ENCODE measurements at regions of chr3 and their contacts with region 1.

Region 1: GRCh38 chr3:10115326-10116137 is at the start of gene BRK1:
- DNase-seq: peak; percentile 90
- H3K4me3 Mint-ChIP-seq: peak within 1 kb of the TSS; percentile 97
- H3K27ac Mint-ChIP-seq: peak within 1 kb of the TSS; percentile 96
- H3K4me1 Mint-ChIP-seq: peaks cover 19% of the 10 kb centered on the region
- H3K27me3 Mint-ChIP-seq: no peaks in the 10 kb centered on the region
- total RNA-seq, gene BRK1: 94.4 and 100 TPM in 2 replicates

Region 2: DNA sequence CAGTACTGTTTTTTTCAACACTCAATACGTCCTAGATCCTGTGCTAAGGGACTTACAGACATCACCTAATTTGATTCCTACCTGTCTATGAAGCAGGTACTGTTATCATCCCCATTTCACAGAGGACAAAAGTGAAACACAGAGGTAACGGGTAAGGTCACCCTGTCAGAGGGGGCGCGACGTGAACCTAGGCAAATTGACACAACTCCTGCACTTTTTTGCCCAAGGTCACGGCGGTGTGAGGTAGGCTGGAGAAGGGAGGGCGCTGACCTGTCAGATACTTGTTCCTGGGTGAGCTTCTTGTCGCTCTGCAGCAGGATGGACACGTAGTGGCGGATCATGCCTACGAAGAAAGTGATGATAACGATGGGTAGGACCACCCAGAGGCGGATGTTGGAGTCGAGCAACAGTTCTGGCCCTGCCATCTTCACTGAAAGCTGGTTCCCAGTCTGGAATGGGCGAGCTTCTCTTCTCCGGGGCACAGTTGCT is 129.3 kb before region 1 on chr3:
- intact Hi-C with region 1: loop called (anchors 2 kb)
- DNase-seq: no peak
- H3K4me3 Mint-ChIP-seq: peak overlapping the region; percentile 96
- H3K27ac Mint-ChIP-seq: peak overlapping the region; percentile 99
- H3K4me1 Mint-ChIP-seq: peaks cover 18% of the 10 kb centered on the region
- H3K27me3 Mint-ChIP-seq: no peaks in the 10 kb centered on the region

Region 3: GRCh38 chr3:10026084-10026890 is 89.2 kb before region 1 on chr3 and contains the start of gene FANCD2:
- intact Hi-C with region 1: loop called (anchors 5 kb)
- DNase-seq: peak; percentile 90
- H3K4me3 Mint-ChIP-seq: peak within 1 kb of the TSS; percentile 98
- H3K27ac Mint-ChIP-seq: peak within 1 kb of the TSS; percentile 99
- H3K4me1 Mint-ChIP-seq: peaks cover 25% of the 10 kb centered on the region
- H3K27me3 Mint-ChIP-seq: no peaks in the 10 kb centered on the region
- total RNA-seq, gene FANCD2: 54.4 and 55.1 TPM in 2 replicates

Region 4: GRCh38 chr3:10142707-10143566 is 27.4 kb after region 1 on chr3:
- intact Hi-C with region 1: loop called (anchors 1 kb)
- DNase-seq: no peak
- H3K4me3 Mint-ChIP-seq: peak overlapping the region; percentile 94
- H3K27ac Mint-ChIP-seq: peak overlapping the region; percentile 92
- H3K4me1 Mint-ChIP-seq: peaks cover 24% of the 10 kb centered on the region
- H3K27me3 Mint-ChIP-seq: no peaks in the 10 kb centered on the region

Region 5: GRCh38 chr3:10192953-10193691 is 77.6 kb after region 1 on chr3:
- intact Hi-C with region 1: no loop called
- DNase-seq: peak; percentile 30
- H3K4me3 Mint-ChIP-seq: peak overlapping the region; percentile 17
- H3K27ac Mint-ChIP-seq: peak overlapping the region; percentile 96
- H3K4me1 Mint-ChIP-seq: peaks cover 73% of the 10 kb centered on the region
- H3K27me3 Mint-ChIP-seq: no peaks in the 10 kb centered on the region

Region 6: GRCh38 chr3:10248184-10249080 is 132.9 kb after region 1 on chr3 and contains the start of gene TATDN2:
- intact Hi-C with region 1: loop called (anchors 1 kb)
- DNase-seq: peak; percentile 94
- H3K4me3 Mint-ChIP-seq: peak within 1 kb of the TSS; percentile 95
- H3K27ac Mint-ChIP-seq: peak within 1 kb of the TSS; percentile 97
- H3K4me1 Mint-ChIP-seq: peaks cover 47% of the 10 kb centered on the region
- H3K27me3 Mint-ChIP-seq: no peaks in the 10 kb centered on the region
- total RNA-seq, gene TATDN2: 64.9 and 65.6 TPM in 2 replicates

Region 7: GRCh38 chr3:10322352-10322710 is 206.8 kb after region 1 on chr3:
- intact Hi-C with region 1: loop called (anchors 5 kb)
- DNase-seq: no peak
- H3K4me3 Mint-ChIP-seq: no peak overlapping the region
- H3K27ac Mint-ChIP-seq: no peak overlapping the region
- H3K4me1 Mint-ChIP-seq: peaks cover 14% of the 10 kb centered on the region
- H3K27me3 Mint-ChIP-seq: peaks cover 15% of the 10 kb centered on the region

Measured in activated T-helper 2 cell treated with anti-CD3 and anti-CD28 coated beads, Interferon-gamma antibody, Interleukin-2, Interleukin-4, amounts not matched to agents 10 μg/mL and 5 μg/mL and 100 μg/mL, durations not matched to agents 14 hours and 24 hours and 36 hours (primary cell).